ENCODE measurements at regions of chr22 and their contacts with region 1.

Region 1: DNA sequence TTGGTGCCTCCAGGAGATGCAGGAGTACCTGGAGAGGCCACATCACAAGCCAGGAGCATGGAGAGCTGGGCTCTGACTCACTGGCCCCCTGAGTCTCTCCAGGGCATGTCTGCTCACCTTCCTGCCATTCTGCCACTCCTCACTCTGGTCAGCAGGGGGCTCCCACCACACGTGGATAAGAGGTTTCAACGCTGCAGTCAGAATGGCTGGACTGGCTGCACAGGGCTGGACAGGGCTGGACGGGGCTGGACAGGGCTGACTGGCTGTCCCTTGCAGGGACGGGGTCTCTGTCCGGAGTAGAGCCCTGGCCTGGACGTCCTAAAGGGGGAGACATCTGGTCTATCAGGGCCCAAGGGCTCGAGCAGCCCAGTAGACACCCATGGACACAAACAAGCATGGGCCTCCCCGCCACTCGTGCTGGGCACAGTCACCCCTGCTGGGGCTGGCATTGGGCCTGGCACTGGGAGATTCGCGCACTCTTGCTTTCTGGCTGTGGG is 34.6 kb downstream of the CYTH4 start:
- DNase-seq: peak; percentile 37 to 85 (median 72)
- ATAC-seq: peak; percentile 91
- H3K4me3 ChIP-seq: no peak overlapping the region
- H3K4me3 Mint-ChIP-seq: no peak overlapping the region
- H3K27ac ChIP-seq: no peak overlapping the region
- H3K27ac Mint-ChIP-seq: no peak overlapping the region
- H3K4me1 ChIP-seq: peaks cover 36% of the 10 kb centered on the region
- H3K4me1 Mint-ChIP-seq: peaks cover 42% of the 10 kb centered on the region
- H3K27me3 ChIP-seq: no peaks in the 10 kb centered on the region
- H3K27me3 Mint-ChIP-seq: no peaks in the 10 kb centered on the region
- CTCF ChIP-seq: peak; percentile 85

Region 2: GRCh38 chr22:37282385-37282677 is 34.6 kb before region 1 on chr22 and contains the start of gene CYTH4:
- CTCF ChIA-PET with region 1: interaction called, 10 read pairs
- POLR2A ChIA-PET with region 1: interaction called, 4 read pairs
- intact Hi-C with region 1: loop called in 1 of 2 experiments (anchors 2 kb)
- DNase-seq: peak; percentile 34 to 88 (median 82)
- ATAC-seq: peak; percentile 76
- H3K4me3 ChIP-seq: peak within 1 kb of the TSS; percentile 84 to 98
- H3K4me3 Mint-ChIP-seq: peak within 1 kb of the TSS; percentile 89
- H3K27ac ChIP-seq: peak within 1 kb of the TSS; percentile 82 to 84
- H3K27ac Mint-ChIP-seq: peak within 1 kb of the TSS; percentile 98
- H3K4me1 ChIP-seq: peaks cover 45% of the 10 kb centered on the region
- H3K4me1 Mint-ChIP-seq: peaks cover 60% of the 10 kb centered on the region
- H3K27me3 ChIP-seq: no peaks in the 10 kb centered on the region
- H3K27me3 Mint-ChIP-seq: no peaks in the 10 kb centered on the region
- CTCF ChIP-seq: no peak
- total RNA-seq, gene CYTH4: 129 to 143 TPM

Region 3: DNA sequence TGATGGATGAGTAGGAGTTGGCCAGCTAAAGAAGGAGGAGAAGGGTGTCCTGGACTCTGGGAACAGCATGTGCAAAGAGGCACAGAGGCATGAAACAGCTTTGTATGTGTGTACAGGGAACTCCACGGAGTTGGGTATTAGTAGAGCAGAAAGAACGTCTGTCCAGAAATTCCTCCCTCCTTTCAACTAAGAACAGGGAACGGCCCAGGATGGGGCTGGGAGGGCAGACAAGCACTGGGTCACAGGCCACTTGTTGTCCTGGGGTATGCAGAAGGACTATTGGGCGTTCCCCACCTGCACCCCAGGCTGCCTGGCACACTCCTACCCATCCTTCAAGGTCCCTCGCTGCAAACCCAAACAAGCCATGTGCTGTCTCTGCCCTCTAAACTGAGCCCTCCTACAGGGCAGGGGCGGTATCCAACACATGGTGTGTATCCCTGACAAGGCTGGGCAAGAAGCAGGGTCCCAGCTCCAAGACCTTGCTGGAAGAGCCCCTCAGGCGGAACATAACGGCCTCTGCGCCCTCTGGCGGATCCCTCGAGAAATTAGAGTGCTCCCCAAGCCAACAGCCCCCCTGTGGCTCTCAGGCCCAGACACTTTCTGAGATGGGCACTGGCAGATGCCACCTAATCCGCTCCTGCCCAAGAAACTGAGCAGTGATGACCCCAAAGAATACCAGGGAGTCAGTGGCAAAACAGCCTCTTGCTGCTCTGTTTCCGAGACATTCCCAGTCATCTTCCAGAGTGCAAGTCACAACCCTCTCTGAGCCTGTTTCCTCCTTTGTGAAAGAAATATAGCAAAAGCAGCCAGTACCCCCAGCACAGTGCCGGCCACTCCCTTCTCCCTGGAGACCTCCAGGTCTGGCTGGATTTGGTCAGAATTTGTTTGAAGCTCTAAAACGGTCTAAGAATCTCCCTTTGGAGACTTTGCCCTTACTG is 112.0 kb after region 1 on chr22:
- CTCF ChIA-PET with region 1: interaction called, 56 read pairs
- POLR2A ChIA-PET with region 1: interaction called, 3 read pairs
- intact Hi-C with region 1: loop called (anchors 1 kb)
- DNase-seq: peak; percentile 30 to 80 (median 65)
- ATAC-seq: peak; percentile 62
- H3K4me3 ChIP-seq: no peak overlapping the region
- H3K4me3 Mint-ChIP-seq: peak overlapping the region; percentile 22
- H3K27ac ChIP-seq: no peak overlapping the region
- H3K27ac Mint-ChIP-seq: no peak overlapping the region
- H3K4me1 ChIP-seq: peaks cover 17% of the 10 kb centered on the region
- H3K4me1 Mint-ChIP-seq: peaks cover 22% of the 10 kb centered on the region
- H3K27me3 ChIP-seq: peaks cover 17 to 25% of the 10 kb centered on the region in 2 experiments
- H3K27me3 Mint-ChIP-seq: peaks cover 54% of the 10 kb centered on the region
- CTCF ChIP-seq: peak; percentile 54

Region 4: DNA sequence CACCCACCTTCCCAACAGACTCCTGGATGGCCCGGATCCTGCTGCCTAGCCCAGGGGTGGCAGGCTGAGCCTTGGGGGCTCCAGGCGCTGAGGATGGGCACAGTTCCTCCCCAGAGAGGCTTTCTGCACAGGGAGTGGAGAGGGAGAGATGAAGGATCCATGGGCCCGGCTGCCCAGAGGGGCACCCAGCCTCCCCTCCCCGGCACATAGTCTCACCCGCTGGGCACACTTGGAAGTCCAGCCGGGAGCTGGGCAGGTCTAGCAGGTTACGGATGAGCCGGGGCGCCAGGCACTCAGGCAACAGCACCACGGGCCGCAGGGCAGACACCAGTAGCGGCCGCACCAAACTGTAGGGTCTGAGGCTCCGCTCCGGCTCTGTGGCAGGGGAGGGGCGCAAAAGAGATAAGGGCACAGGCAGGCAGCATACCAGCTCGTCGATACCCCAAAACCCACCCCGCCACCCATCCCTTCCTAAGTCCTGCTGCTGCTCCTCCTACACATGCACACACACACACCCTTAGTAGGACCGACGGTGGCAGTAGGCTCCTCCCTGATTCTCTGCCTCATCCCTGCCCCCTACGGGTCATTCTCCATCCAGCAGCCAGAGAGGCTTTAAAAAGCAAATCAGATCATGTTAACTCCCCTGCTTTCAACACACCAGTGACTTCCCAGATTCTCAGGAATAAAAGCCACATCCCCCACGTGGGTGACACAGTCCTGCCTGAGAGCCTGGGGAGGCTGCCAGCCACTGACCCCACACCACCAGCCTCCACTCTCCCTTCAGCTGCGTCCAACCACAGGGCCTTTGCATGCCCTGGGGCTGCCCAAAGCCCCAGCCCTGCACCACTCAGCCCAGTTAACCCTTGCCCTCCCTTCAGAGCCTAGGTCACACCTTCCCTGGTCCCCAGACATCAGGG is 175.8 kb after region 1 on chr22:
- CTCF ChIA-PET with region 1: interaction called, 5 read pairs
- POLR2A ChIA-PET with region 1: no interaction called
- intact Hi-C with region 1: loop called in 1 of 2 experiments (anchors 1 kb)
- DNase-seq: peak in 8 of 9 experiments; percentile 39 to 71 (median 62)
- ATAC-seq: peak; percentile 93
- H3K4me3 ChIP-seq: no peak overlapping the region
- H3K4me3 Mint-ChIP-seq: no peak overlapping the region
- H3K27ac ChIP-seq: no peak overlapping the region
- H3K27ac Mint-ChIP-seq: no peak overlapping the region
- H3K4me1 ChIP-seq: peaks cover 31% of the 10 kb centered on the region
- H3K4me1 Mint-ChIP-seq: peaks cover 37% of the 10 kb centered on the region
- H3K27me3 ChIP-seq: peaks cover 0 to 2% of the 10 kb centered on the region in 2 experiments
- H3K27me3 Mint-ChIP-seq: no peaks in the 10 kb centered on the region
- CTCF ChIP-seq: peak; percentile 42

Region 5: GRCh38 chr22:37498289-37498909 is 181.5 kb after region 1 on chr22:
- CTCF ChIA-PET with region 1: interaction called, 5 read pairs
- POLR2A ChIA-PET with region 1: no interaction called
- intact Hi-C with region 1: loop called (anchors 1 kb)
- DNase-seq: peak; percentile 47 to 85 (median 75)
- ATAC-seq: peak; percentile 99
- H3K4me3 ChIP-seq: no peak overlapping the region
- H3K4me3 Mint-ChIP-seq: no peak overlapping the region
- H3K27ac ChIP-seq: no peak overlapping the region
- H3K27ac Mint-ChIP-seq: no peak overlapping the region
- H3K4me1 ChIP-seq: peaks cover 20% of the 10 kb centered on the region
- H3K4me1 Mint-ChIP-seq: peaks cover 29% of the 10 kb centered on the region
- H3K27me3 ChIP-seq: peaks cover 0 to 2% of the 10 kb centered on the region in 2 experiments
- H3K27me3 Mint-ChIP-seq: no peaks in the 10 kb centered on the region
- CTCF ChIP-seq: peak; percentile 67

Region 6: DNA sequence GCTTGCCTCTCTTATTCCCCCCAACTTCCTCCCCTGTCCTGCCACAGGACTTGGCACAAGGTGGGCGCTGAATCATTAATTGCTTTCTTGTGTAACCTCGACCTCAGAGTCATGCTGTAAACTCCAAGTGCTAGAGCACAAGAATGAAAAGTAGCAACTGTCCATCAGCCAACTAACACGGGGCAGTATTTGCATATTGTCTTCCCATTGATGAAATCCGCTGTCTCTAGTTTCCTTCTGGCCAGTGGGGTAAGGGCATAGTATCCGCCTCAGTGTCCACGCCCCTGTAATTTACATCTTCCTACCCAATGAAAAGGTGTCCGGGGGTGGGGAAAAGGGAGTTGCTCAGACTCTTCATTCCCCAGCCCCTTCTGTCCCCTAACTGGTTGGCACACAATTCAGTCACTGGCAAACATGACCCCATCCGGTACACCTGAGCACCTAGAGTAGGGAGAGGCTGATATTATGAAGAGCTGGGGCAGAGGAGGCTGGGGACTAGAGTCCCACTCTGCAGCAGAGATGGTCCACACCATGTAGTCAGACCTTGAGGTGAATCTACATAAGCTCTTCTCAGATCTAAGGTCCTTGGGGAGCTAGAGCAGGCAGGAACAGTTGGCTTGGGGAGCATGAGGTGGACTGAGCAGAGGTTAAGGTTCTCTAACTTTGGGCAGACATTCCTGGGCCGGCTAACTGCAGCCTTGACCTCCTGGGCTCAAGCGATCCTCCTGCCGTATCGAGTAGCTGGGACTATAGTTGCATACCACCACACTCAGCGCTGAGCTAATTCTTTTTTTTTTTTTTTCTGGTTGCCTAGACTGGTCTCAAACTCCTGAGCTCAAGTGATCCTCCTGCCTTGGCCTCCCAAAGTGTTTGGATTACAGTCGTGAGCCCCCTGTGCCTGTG is 284.9 kb after region 1 on chr22:
- CTCF ChIA-PET with region 1: interaction called, 4 read pairs
- POLR2A ChIA-PET with region 1: no interaction called
- intact Hi-C with region 1: loop called in 1 of 2 experiments (anchors 10 kb)
- DNase-seq: no peak
- ATAC-seq: no peak
- H3K4me3 ChIP-seq: no peak overlapping the region
- H3K4me3 Mint-ChIP-seq: no peak overlapping the region
- H3K27ac ChIP-seq: no peak overlapping the region
- H3K27ac Mint-ChIP-seq: no peak overlapping the region
- H3K4me1 ChIP-seq: peaks cover 27% of the 10 kb centered on the region
- H3K4me1 Mint-ChIP-seq: peaks cover 31% of the 10 kb centered on the region
- H3K27me3 ChIP-seq: no peaks in the 10 kb centered on the region
- H3K27me3 Mint-ChIP-seq: no peaks in the 10 kb centered on the region
- CTCF ChIP-seq: no peak

Measured in CD8-positive, alpha-beta T cell (primary cell).